Activated naive CD8-positive, alpha-beta T cell treated with anti-CD3 and anti-CD28 coated beads, Interleukin-2, amount 10 ng/mL, durations not matched to agents 7 days and 5 days (primary cell): ENCODE measurements at regions of chr3 and their contacts with region 1.

Region 1: DNA sequence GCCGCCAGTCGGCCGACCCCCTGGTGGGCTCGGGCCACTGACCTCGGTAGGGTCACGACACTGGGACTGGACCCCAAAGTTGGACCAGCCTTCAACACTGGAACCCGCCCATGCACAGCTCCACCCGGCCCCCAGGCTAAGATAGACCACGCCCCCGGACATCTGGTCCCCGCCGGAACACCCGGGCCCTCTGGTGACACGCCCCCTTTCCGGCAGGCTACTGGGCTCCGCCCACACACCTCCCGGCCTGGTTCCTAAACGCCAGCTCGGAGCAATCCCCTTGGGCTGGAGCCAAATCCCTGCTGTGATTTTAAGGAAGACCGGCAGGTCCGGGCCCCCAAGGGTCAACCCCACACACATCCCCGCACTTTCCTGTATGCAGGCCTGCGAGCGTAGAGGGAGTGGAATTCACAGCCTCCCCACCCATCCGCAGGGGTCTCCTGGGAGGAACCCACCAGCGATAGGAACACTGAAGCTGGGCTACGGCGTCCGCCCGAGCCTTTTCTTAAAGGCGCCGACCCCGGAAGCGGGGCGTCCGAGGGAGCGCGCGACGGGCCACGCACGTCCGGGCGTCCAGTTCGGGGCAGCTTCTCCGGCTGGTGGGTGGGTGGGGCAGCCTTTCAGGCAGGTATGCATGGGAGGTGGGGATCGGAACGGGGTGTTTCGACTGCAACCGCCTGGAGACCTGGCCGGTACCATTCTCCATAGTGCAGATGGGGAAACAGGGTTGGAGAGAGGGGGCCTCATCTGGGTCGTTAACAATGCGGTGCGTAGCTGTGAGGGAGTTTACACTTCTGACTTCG is at the start of gene HEMK1:
- DNase-seq: peak; percentile 94
- ATAC-seq: peak; percentile 27
- H3K4me3 Mint-ChIP-seq: peak within 1 kb of the TSS; percentile 96
- H3K27ac Mint-ChIP-seq: peak within 1 kb of the TSS; percentile 99
- H3K4me1 Mint-ChIP-seq: peaks cover 59% of the 10 kb centered on the region
- H3K27me3 Mint-ChIP-seq: no peaks in the 10 kb centered on the region
- total RNA-seq, gene HEMK1: 97.4 to 102 TPM

Region 2: DNA sequence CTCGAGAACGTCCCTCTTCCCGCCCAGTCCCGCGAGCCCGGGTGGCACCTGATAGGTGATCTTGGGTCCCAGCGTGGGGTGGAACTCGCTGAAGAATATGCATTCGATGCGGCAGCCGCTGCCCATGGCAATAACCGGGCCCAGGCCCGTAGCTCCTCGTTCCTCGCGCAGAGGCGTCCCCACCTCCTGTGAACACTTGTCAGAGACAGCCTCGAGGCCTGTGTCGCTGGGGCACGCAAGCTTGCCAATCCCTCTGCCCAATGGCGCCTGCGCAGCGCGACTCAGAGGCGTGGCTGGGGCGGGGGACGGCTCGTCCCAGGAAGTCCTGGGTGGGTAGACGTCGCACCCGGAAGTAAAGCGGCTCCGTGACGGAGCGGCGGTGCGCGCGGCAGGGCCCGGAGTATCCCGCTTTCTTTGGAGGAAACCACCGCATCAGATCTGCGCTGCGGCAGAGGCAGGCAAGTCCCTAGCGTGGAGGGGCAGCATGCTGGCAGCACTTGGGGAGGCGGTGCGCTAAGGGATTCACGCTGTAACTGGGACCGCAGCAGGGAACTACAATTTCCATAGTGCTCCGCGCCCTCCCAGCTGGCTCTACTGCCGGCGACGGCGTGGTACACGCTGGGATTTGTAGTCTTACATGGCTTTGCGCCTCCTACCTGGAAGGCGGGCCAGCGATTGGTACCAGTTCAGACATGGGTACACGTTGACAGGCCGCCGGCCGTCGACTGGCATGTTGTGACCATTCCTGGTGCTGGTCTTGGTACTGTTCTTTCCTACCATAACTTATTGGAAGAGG is 218.4 kb before region 1 on chr3 and contains the starts of genes CYB561D2 and NPRL2:
- POLR2A ChIA-PET with region 1: interaction called, 14 read pairs
- DNase-seq: peak; percentile 99
- ATAC-seq: peak; percentile 90
- H3K4me3 Mint-ChIP-seq: peak within 1 kb of the TSS; percentile 90
- H3K27ac Mint-ChIP-seq: peak within 1 kb of the TSS; percentile 93
- H3K4me1 Mint-ChIP-seq: peaks cover 46% of the 10 kb centered on the region
- H3K27me3 Mint-ChIP-seq: no peaks in the 10 kb centered on the region
- total RNA-seq, gene CYB561D2: 35.0 to 38.9 TPM
- total RNA-seq, gene NPRL2: 55.8 to 58.2 TPM

Region 3: DNA sequence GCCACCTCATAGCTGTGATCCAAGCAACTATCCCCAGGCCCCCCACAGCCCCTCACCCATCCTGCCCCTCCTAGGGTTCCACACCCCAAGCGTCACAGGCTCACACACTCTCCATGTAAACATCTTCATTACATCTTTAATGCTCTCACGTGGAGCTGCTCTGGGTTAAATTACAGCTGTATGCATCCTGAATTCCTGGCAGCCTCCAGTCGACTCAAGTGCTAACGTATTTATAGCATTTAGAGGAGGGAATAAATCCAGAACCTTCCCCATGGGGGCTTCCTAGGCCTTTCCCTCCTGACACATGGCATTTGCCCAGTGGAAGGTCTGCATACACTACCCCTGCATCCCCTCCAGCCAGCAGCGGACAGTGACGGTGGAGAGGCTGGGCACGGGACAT is 11.2 kb before region 1 on chr3:
- POLR2A ChIA-PET with region 1: interaction called, 37 read pairs
- DNase-seq: no peak
- ATAC-seq: no peak
- H3K4me3 Mint-ChIP-seq: no peak overlapping the region
- H3K27ac Mint-ChIP-seq: no peak overlapping the region
- H3K4me1 Mint-ChIP-seq: peaks cover 3% of the 10 kb centered on the region
- H3K27me3 Mint-ChIP-seq: no peaks in the 10 kb centered on the region

Region 4: DNA sequence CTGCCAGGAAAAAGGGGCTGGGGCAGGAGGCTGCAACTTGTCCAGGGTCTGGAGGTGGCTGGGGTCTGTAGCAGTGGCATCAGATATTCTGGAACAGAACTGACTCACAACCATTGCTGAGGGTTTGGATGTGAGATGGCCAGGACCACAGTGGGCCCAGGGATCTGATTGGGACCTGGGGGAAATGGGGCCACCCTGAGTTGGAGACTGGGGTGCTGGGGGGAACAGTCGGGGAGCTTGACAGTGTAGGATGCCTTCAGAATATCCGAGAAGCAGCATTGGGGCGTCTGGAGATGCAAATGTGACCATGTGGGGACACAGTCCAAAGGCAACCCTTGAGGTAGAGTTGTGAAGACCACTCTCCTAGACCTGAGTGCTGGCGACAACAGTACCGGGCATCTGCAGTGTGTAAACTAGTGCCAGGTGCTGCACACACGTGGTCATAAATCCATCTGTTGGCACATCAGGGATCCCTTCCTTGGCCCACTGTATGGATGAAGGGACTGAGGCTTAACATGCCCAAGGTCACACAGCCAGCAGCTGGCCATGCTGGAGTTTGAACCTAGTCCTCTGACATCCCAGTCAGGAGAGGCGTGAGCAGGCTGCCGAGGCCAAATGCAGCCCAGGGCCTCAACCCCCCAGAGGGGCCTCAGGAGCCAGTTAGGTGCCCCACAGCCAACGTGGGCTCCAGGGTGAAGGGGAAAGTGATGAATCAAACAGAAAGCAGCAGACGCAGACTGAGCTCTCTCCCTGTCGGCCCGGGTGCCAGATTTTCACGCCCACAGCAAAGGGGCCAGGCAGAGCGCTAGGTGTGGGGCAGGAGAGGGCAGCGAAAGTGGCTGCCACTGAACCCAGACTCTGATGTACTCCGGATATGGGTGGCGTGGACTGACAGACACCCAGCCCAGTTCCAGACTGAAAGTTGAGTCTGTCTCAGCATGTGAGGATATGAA is 18.9 kb after region 1 on chr3:
- POLR2A ChIA-PET with region 1: interaction called, 958 read pairs
- DNase-seq: peak; percentile 69
- ATAC-seq: peak; percentile 30
- H3K4me3 Mint-ChIP-seq: peak overlapping the region; percentile 51
- H3K27ac Mint-ChIP-seq: peak overlapping the region; percentile 94
- H3K4me1 Mint-ChIP-seq: peaks cover 81% of the 10 kb centered on the region
- H3K27me3 Mint-ChIP-seq: no peaks in the 10 kb centered on the region

Region 5: GRCh38 chr3:50652709-50653108 is 83.6 kb after region 1 on chr3:
- POLR2A ChIA-PET with region 1: interaction called, 48 read pairs
- DNase-seq: peak; percentile 65
- ATAC-seq: peak; percentile 46
- H3K4me3 Mint-ChIP-seq: no peak overlapping the region
- H3K27ac Mint-ChIP-seq: peak overlapping the region; percentile 22
- H3K4me1 Mint-ChIP-seq: peaks cover 23% of the 10 kb centered on the region
- H3K27me3 Mint-ChIP-seq: no peaks in the 10 kb centered on the region